GM12878 (cell line): ENCODE measurements at regions of chr6 and their contacts with region 1.

Region 1: GRCh38 chr6:11324453-11325015 is 92.1 kb upstream of the NEDD9 start:
- DNase-seq: peak; percentile 61
- ATAC-seq: peak; percentile 71
- H3K4me3 ChIP-seq: no peak overlapping the region
- H3K27ac ChIP-seq: peak overlapping the region; percentile 45
- H3K4me1 ChIP-seq: peaks cover 41% of the 10 kb centered on the region
- H3K27me3 ChIP-seq: no peaks in the 10 kb centered on the region
- CTCF ChIP-seq: no peak
- EP300 ChIP-seq: peak; percentile 57 to 76; a peak in 2 of 4 replicates
- POLR2A ChIP-seq: no peak
- RAD21 ChIP-seq: 0 out of 2 replicates have a peak, but pooled peaks have one; percentile 13

Region 2: GRCh38 chr6:11144393-11144851 is 180.1 kb before region 1 on chr6:
- CTCF ChIA-PET with region 1: no interaction called
- POLR2A ChIA-PET with region 1: no interaction called
- RAD21 ChIA-PET with region 1: no interaction called
- SMC1A ChIA-PET with region 1: interaction called, 3 read pairs
- in situ Hi-C with region 1: no loop called
- intact Hi-C with region 1: loop called (anchors 5 kb)
- DNase-seq: peak; percentile 49
- ATAC-seq: peak; percentile 99
- H3K4me3 ChIP-seq: no peak overlapping the region
- H3K27ac ChIP-seq: no peak overlapping the region
- H3K4me1 ChIP-seq: peaks cover 3% of the 10 kb centered on the region; the same call in 1 of the 2 replicates
- H3K27me3 ChIP-seq: no peaks in the 10 kb centered on the region
- CTCF ChIP-seq: peak; percentile 93 to 97 (median 95)
- EP300 ChIP-seq: no peak
- POLR2A ChIP-seq: no peak
- RAD21 ChIP-seq: peak; percentile 100

Region 3: DNA sequence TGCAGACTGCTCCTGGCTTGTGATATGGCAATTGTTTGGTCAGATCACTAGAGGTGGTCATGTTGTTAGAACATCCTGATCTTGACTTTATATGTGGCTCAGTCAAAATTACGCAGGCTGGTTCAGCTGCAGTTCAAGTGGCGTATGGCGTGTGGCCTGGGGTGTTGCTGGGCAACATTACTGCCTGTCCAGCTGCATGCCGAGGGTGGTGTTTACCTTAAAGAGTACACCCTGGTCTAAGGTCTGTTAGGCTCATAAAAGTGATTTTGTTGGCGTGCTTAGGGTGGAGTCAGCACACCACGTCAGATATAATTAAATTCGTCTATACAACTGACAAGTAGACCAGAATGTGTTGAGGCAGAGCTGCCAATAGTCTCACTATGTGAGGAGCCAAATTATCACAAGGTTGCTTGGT is 36.5 kb before region 1 on chr6:
- CTCF ChIA-PET with region 1: interaction called, 3 read pairs
- POLR2A ChIA-PET with region 1: interaction called, 4 read pairs
- RAD21 ChIA-PET with region 1: interaction called, 3 read pairs
- SMC1A ChIA-PET with region 1: interaction called, 13 read pairs
- in situ Hi-C with region 1: no loop called
- intact Hi-C with region 1: no loop called
- DNase-seq: no peak
- ATAC-seq: no peak
- H3K4me3 ChIP-seq: no peak overlapping the region
- H3K27ac ChIP-seq: no peak overlapping the region
- H3K4me1 ChIP-seq: no peaks in the 10 kb centered on the region; the same call in 1 of the 2 replicates
- H3K27me3 ChIP-seq: no peaks in the 10 kb centered on the region
- CTCF ChIP-seq: no peak
- EP300 ChIP-seq: no peak
- POLR2A ChIP-seq: no peak
- RAD21 ChIP-seq: no peak

Region 4: GRCh38 chr6:11353921-11354389 is 29.4 kb after region 1 on chr6:
- CTCF ChIA-PET with region 1: interaction called, 3 read pairs
- POLR2A ChIA-PET with region 1: interaction called, 4 read pairs
- RAD21 ChIA-PET with region 1: interaction called, 13 read pairs
- SMC1A ChIA-PET with region 1: interaction called, 66 read pairs
- in situ Hi-C with region 1: no loop called
- intact Hi-C with region 1: no loop called
- DNase-seq: no peak
- ATAC-seq: peak; percentile 85
- H3K4me3 ChIP-seq: no peak overlapping the region
- H3K27ac ChIP-seq: peak overlapping the region; percentile 43
- H3K4me1 ChIP-seq: peaks cover 13% of the 10 kb centered on the region
- H3K27me3 ChIP-seq: no peaks in the 10 kb centered on the region
- CTCF ChIP-seq: no peak
- EP300 ChIP-seq: no peak
- POLR2A ChIP-seq: no peak
- RAD21 ChIP-seq: no peak

Region 5: GRCh38 chr6:11467364-11467763 is 142.8 kb after region 1 on chr6:
- CTCF ChIA-PET with region 1: no interaction called
- POLR2A ChIA-PET with region 1: interaction called, 3 read pairs
- RAD21 ChIA-PET with region 1: interaction called, 3 read pairs
- SMC1A ChIA-PET with region 1: interaction called, 10 read pairs
- in situ Hi-C with region 1: no loop called
- intact Hi-C with region 1: no loop called
- DNase-seq: peak; percentile 88
- ATAC-seq: peak; percentile 82
- H3K4me3 ChIP-seq: no peak overlapping the region
- H3K27ac ChIP-seq: peak overlapping the region; percentile 91
- H3K4me1 ChIP-seq: peaks cover 30% of the 10 kb centered on the region
- H3K27me3 ChIP-seq: no peaks in the 10 kb centered on the region
- CTCF ChIP-seq: no peak
- EP300 ChIP-seq: no peak
- POLR2A ChIP-seq: no peak
- RAD21 ChIP-seq: peak; percentile 25

Region 6: GRCh38 chr6:11900662-11901598 is 576.4 kb after region 1 on chr6:
- CTCF ChIA-PET with region 1: no interaction called
- POLR2A ChIA-PET with region 1: no interaction called
- RAD21 ChIA-PET with region 1: no interaction called
- SMC1A ChIA-PET with region 1: no interaction called
- in situ Hi-C with region 1: no loop called
- intact Hi-C with region 1: no loop called
- DNase-seq: no peak
- ATAC-seq: no peak
- H3K4me3 ChIP-seq: 0 out of 2 replicates have a peak overlapping the region, but pooled peaks have one; percentile 5
- H3K27ac ChIP-seq: no peak overlapping the region
- H3K4me1 ChIP-seq: no peaks in the 10 kb centered on the region
- H3K27me3 ChIP-seq: no peaks in the 10 kb centered on the region
- CTCF ChIP-seq: no peak
- EP300 ChIP-seq: no peak
- POLR2A ChIP-seq: no peak
- RAD21 ChIP-seq: no peak